ENCODE measurements at regions of chr12 and their contacts with region 1.

Region 1: GRCh38 chr12:49232940-49233841 is 31.7 kb upstream of the TUBA1C start:
- DNase-seq: no peak
- H3K4me3 Mint-ChIP-seq: peak overlapping the region; percentile 37
- H3K27ac Mint-ChIP-seq: peak overlapping the region; percentile 73
- H3K4me1 Mint-ChIP-seq: peaks cover 16% of the 10 kb centered on the region
- H3K27me3 Mint-ChIP-seq: peaks cover 8% of the 10 kb centered on the region

Region 2: DNA sequence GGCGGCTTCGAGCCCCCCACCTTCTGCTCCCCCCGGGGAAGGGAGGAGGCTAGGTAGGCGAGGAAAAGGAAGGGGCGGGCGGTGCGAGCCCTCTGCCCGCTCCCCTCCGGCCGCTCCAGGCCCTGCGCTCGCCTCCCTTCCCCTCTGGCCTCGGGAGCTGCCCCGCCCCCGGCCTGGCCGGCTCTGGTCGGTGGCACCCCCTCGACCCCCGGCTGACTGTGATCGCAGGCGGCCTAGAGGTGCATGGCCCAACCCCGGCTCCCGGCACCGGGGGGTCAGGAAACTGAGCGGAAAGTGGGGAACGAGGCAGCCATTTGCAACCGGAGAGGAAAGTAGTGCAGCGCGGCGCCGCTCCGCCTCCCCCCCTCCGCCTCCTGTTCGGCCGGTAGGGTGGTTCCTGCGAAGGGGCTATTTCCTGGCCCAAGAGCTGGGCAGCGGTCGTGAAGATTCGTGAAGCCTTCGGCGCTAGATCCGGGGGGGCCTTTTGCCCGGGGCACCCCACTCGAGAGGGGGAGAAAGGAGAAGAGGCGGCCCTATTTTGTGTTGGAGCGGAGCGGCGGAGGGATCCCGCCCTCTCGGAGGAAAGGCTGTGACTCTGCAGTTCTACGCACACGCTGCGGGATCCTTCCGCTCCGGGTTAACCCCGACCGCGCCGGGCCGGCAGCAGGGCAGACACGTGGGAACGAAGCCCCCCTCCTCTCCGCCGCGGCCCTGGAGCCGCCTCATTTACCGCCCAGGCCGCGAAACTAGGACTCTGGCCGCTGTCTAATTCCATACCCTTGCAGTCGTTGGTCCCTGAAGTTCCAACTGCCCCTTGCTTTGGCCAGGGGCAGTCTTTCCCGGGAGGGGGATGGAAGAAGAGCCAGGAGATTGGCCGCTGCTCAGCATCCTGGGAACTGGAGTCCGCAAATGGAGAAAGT is 172.7 kb before region 1 on chr12 and contains the start of gene KMT2D:
- intact Hi-C with region 1: loop called (anchors 2 kb)
- DNase-seq: peak; percentile 89
- H3K4me3 Mint-ChIP-seq: peak within 1 kb of the TSS; percentile 92
- H3K27ac Mint-ChIP-seq: peak within 1 kb of the TSS; percentile 89
- H3K4me1 Mint-ChIP-seq: peaks cover 43% of the 10 kb centered on the region
- H3K27me3 Mint-ChIP-seq: no peaks in the 10 kb centered on the region
- total RNA-seq, gene KMT2D: 93.3 and 100 TPM in 2 replicates

Region 3: DNA sequence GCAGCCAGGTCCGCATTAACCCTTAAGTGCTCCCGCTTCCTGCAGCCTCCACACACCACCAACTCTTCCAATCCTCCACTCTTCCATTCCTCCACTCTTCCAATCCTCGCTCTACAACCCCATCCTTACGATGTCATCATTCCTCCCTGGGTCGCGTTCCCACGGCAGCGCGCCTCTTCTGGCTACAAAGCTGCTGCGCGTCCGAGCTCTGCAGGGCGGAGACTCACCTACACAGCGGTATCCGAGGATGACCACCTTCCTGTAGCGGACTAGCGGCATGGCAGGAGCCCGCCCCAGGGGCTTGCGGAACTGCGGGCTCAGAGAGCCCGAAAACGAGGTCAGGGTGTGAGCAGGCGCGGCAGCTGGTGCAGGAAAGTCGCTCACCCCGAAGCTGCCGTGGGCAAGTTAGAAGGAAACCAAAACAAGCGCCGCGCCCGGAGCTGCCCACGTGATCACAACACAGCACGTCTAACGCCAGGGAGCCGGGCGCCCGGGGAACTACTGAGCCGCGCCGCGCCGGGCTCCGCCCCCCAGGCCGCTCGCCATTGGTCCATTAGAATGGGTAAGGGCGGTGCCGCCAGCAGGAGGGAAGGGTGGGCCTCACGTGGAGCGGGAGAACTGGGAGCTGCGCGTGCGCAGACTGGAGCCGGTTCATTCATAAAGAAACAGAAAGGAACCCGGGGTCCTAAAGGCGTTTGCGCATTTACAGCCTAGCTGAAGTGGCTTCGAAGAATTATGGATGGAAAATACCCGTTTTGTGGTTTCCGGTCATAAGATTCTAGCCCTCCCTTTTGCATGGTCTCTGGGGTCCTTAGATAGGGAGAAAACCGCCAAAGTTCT is 163.5 kb before region 1 on chr12 and contains the start of gene RHEBL1:
- intact Hi-C with region 1: loop called (anchors 2 kb)
- DNase-seq: peak; percentile 100
- H3K4me3 Mint-ChIP-seq: peak within 1 kb of the TSS; percentile 98
- H3K27ac Mint-ChIP-seq: peak within 1 kb of the TSS; percentile 92
- H3K4me1 Mint-ChIP-seq: peaks cover 25% of the 10 kb centered on the region
- H3K27me3 Mint-ChIP-seq: no peaks in the 10 kb centered on the region
- total RNA-seq, gene RHEBL1: 14.2 and 16.0 TPM in 2 replicates

Region 4: GRCh38 chr12:49264738-49265515 is 31.7 kb after region 1 on chr12 and contains the start of gene TUBA1C:
- intact Hi-C with region 1: loop called (anchors 1 kb)
- DNase-seq: peak; percentile 92
- H3K4me3 Mint-ChIP-seq: peak within 1 kb of the TSS; percentile 100
- H3K27ac Mint-ChIP-seq: peak within 1 kb of the TSS; percentile 98
- H3K4me1 Mint-ChIP-seq: peaks cover 41% of the 10 kb centered on the region
- H3K27me3 Mint-ChIP-seq: no peaks in the 10 kb centered on the region
- total RNA-seq, gene TUBA1C: 349 and 355 TPM in 2 replicates

Region 5: GRCh38 chr12:49279706-49280159 is 46.5 kb after region 1 on chr12:
- intact Hi-C with region 1: no loop called
- DNase-seq: no peak
- H3K4me3 Mint-ChIP-seq: no peak overlapping the region
- H3K27ac Mint-ChIP-seq: no peak overlapping the region
- H3K4me1 Mint-ChIP-seq: no peaks in the 10 kb centered on the region
- H3K27me3 Mint-ChIP-seq: peaks cover 15% of the 10 kb centered on the region